ENCODE measurements at regions of chr3 and their contacts with region 1.

Region 1: DNA sequence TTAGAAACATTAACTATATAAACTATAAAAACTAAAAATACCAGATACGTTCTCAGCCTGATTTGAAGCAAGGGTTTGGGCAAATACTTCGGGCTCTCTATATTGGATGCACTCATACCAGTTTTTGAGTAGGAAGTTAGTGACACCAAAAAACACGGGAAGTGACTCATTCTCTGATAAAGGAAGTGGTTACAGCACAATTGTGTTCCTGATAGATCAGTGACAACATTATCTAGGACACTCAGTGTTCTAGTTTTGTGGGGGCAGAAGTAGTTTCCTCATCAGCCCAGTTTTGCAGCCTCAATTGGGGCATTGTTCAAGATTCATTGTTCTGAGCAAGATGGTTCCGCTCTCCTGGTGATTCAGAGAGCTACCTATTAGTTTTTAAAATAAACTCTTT is 469.6 kb upstream of the DPPA4 start:
- DNase-seq: peak; percentile 84
- H3K4me3 Mint-ChIP-seq: peak overlapping the region; percentile 54
- H3K27ac Mint-ChIP-seq: peak overlapping the region; percentile 57
- H3K4me1 Mint-ChIP-seq: peaks cover 31% of the 10 kb centered on the region
- H3K27me3 Mint-ChIP-seq: peaks cover 7% of the 10 kb centered on the region

Region 2: GRCh38 chr3:108767253-108767652 is 1039.7 kb before region 1 on chr3:
- intact Hi-C with region 1: no loop called
- DNase-seq: no peak
- H3K4me3 Mint-ChIP-seq: no peak overlapping the region
- H3K27ac Mint-ChIP-seq: no peak overlapping the region
- H3K4me1 Mint-ChIP-seq: peaks cover 3% of the 10 kb centered on the region
- H3K27me3 Mint-ChIP-seq: peaks cover 14% of the 10 kb centered on the region

Region 3: GRCh38 chr3:109656225-109656624 is 150.7 kb before region 1 on chr3:
- intact Hi-C with region 1: no loop called
- DNase-seq: no peak
- H3K4me3 Mint-ChIP-seq: no peak overlapping the region
- H3K27ac Mint-ChIP-seq: no peak overlapping the region
- H3K4me1 Mint-ChIP-seq: no peaks in the 10 kb centered on the region
- H3K27me3 Mint-ChIP-seq: no peaks in the 10 kb centered on the region

Region 4: GRCh38 chr3:111700054-111700453 is 1893.1 kb after region 1 on chr3:
- intact Hi-C with region 1: loop called (anchors 5 kb)
- DNase-seq: peak; percentile 69
- H3K4me3 Mint-ChIP-seq: peak overlapping the region; percentile 71
- H3K27ac Mint-ChIP-seq: peak overlapping the region; percentile 81
- H3K4me1 Mint-ChIP-seq: peaks cover 42% of the 10 kb centered on the region
- H3K27me3 Mint-ChIP-seq: no peaks in the 10 kb centered on the region

Measured in activated CD4-positive, alpha-beta T cell treated with anti-CD3 and anti-CD28 coated beads, Interleukin-2, amount 10 ng/mL, durations not matched to agents 24 days and 14 days (primary cell).